A673 (cell line): ENCODE measurements at regions of chr9 and their contacts with region 1.

Region 1: GRCh38 chr9:96856363-96857286 is 2.3 kb upstream of the ZNF782 start:
- DNase-seq: peak; percentile 83
- H3K4me3 ChIP-seq: no peak overlapping the region
- H3K27ac ChIP-seq: no peak overlapping the region
- H3K4me1 ChIP-seq: peaks cover 1% of the 10 kb centered on the region
- H3K27me3 ChIP-seq: no peaks in the 10 kb centered on the region
- CTCF ChIP-seq: peak; percentile 96

Region 2: GRCh38 chr9:96449845-96450612 is 406.6 kb before region 1 on chr9 and contains the start of gene HABP4:
- CTCF ChIA-PET with region 1: no interaction called
- POLR2A ChIA-PET with region 1: no interaction called
- intact Hi-C with region 1: no loop called
- DNase-seq: peak; percentile 96
- H3K4me3 ChIP-seq: peak within 1 kb of the TSS; percentile 75
- H3K27ac ChIP-seq: peak within 1 kb of the TSS; percentile 51
- H3K4me1 ChIP-seq: peaks cover 12% of the 10 kb centered on the region
- H3K27me3 ChIP-seq: no peaks in the 10 kb centered on the region
- CTCF ChIP-seq: no peak
- total RNA-seq, gene HABP4: 11.3 and 11.6 TPM in 2 replicates

Region 3: GRCh38 chr9:97109194-97109811 is 252.7 kb after region 1 on chr9:
- CTCF ChIA-PET with region 1: interaction called, 7 read pairs
- POLR2A ChIA-PET with region 1: no interaction called
- intact Hi-C with region 1: loop called (anchors 1 kb)
- DNase-seq: peak; percentile 70
- H3K4me3 ChIP-seq: no peak overlapping the region
- H3K27ac ChIP-seq: no peak overlapping the region
- H3K4me1 ChIP-seq: no peaks in the 10 kb centered on the region
- H3K27me3 ChIP-seq: no peaks in the 10 kb centered on the region
- CTCF ChIP-seq: peak; percentile 72

Region 4: GRCh38 chr9:97188545-97188944 is 331.9 kb after region 1 on chr9:
- CTCF ChIA-PET with region 1: no interaction called
- POLR2A ChIA-PET with region 1: no interaction called
- intact Hi-C with region 1: no loop called
- DNase-seq: no peak
- H3K4me3 ChIP-seq: no peak overlapping the region
- H3K27ac ChIP-seq: no peak overlapping the region
- H3K4me1 ChIP-seq: no peaks in the 10 kb centered on the region
- H3K27me3 ChIP-seq: peaks cover 3% of the 10 kb centered on the region
- CTCF ChIP-seq: no peak

Region 5: DNA sequence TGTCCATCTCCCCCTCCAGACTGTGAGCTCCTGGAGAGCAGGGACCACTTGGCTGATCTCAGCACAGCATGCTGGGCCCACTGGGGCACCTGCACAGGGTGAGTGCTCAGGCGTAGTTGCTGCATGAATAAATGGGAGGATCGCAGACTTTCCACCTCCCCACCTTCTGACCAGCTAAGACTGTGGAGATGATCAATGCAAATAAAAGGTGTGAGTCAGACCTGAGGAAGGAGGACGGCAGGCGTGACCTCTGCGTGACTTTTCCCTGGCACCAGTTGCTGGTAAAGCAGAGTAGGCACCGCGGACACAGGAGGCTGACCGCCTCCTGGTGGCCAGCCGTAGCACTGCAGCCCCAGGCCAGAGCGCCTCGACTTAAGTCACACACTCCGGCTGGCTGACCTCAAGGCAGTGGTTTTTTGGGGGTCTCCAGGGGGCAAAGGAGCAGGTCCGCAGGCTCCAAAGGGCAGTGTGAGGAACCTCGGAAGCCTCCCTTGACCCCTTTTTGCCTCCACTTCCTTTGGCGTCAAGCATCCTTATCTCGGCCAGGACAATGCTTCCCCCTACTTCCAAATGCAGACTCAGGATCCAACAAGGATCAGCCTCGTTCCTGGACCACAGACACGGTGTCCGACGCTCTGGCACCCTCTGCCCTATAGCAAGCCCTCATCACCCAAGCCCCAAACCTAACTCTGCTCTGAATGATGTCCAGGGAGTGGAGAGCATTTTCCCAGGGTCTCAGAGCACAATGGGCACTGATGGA is 542.6 kb after region 1 on chr9:
- CTCF ChIA-PET with region 1: interaction called, 3 read pairs
- POLR2A ChIA-PET with region 1: no interaction called
- intact Hi-C with region 1: loop called (anchors 1 kb)
- DNase-seq: peak; percentile 58
- H3K4me3 ChIP-seq: no peak overlapping the region
- H3K27ac ChIP-seq: no peak overlapping the region
- H3K4me1 ChIP-seq: no peaks in the 10 kb centered on the region
- H3K27me3 ChIP-seq: no peaks in the 10 kb centered on the region
- CTCF ChIP-seq: peak; percentile 97

Region 6: GRCh38 chr9:97411789-97412625 is 555.4 kb after region 1 on chr9 and contains the start of gene TDRD7:
- CTCF ChIA-PET with region 1: no interaction called
- POLR2A ChIA-PET with region 1: no interaction called
- intact Hi-C with region 1: no loop called
- DNase-seq: peak; percentile 87
- H3K4me3 ChIP-seq: peak within 1 kb of the TSS; percentile 82
- H3K27ac ChIP-seq: no peak within 1 kb of the TSS
- H3K4me1 ChIP-seq: no peaks in the 10 kb centered on the region
- H3K27me3 ChIP-seq: peaks cover 5% of the 10 kb centered on the region
- CTCF ChIP-seq: peak; percentile 93
- total RNA-seq, gene TDRD7: 3.6 and 4.9 TPM in 2 replicates